ENCODE measurements at regions of chr19 and their contacts with region 1.

Region 1: GRCh38 chr19:6021878-6022569 is 44.1 kb upstream of the RANBP3 start:
- DNase-seq: peak; percentile 15
- ATAC-seq: peak; percentile 93
- H3K4me3 ChIP-seq: no peak overlapping the region
- H3K27ac ChIP-seq: no peak overlapping the region
- H3K4me1 ChIP-seq: no peaks in the 10 kb centered on the region
- H3K27me3 ChIP-seq: no peaks in the 10 kb centered on the region
- CTCF ChIP-seq: peak; percentile 77

Region 2: GRCh38 chr19:5987077-5987818 is 34.8 kb before region 1 on chr19:
- CTCF ChIA-PET with region 1: interaction called, 6 read pairs
- POLR2A ChIA-PET with region 1: no interaction called
- in situ Hi-C with region 1: no loop called
- intact Hi-C with region 1: loop called (anchors 2 kb)
- DNase-seq: peak; percentile 57
- ATAC-seq: peak; percentile 54; the same call in 1 of the 2 replicates
- H3K4me3 ChIP-seq: peak overlapping the region; percentile 14 to 48; a peak in 3 of 4 replicates
- H3K27ac ChIP-seq: peak overlapping the region; percentile 34; the same call in 1 of the 2 replicates
- H3K4me1 ChIP-seq: peaks cover 8% of the 10 kb centered on the region; the same call in 1 of the 2 replicates
- H3K27me3 ChIP-seq: no peaks in the 10 kb centered on the region
- CTCF ChIP-seq: peak; percentile 89